ENCODE measurements at regions of chr2 and their contacts with region 1.

Region 1: DNA sequence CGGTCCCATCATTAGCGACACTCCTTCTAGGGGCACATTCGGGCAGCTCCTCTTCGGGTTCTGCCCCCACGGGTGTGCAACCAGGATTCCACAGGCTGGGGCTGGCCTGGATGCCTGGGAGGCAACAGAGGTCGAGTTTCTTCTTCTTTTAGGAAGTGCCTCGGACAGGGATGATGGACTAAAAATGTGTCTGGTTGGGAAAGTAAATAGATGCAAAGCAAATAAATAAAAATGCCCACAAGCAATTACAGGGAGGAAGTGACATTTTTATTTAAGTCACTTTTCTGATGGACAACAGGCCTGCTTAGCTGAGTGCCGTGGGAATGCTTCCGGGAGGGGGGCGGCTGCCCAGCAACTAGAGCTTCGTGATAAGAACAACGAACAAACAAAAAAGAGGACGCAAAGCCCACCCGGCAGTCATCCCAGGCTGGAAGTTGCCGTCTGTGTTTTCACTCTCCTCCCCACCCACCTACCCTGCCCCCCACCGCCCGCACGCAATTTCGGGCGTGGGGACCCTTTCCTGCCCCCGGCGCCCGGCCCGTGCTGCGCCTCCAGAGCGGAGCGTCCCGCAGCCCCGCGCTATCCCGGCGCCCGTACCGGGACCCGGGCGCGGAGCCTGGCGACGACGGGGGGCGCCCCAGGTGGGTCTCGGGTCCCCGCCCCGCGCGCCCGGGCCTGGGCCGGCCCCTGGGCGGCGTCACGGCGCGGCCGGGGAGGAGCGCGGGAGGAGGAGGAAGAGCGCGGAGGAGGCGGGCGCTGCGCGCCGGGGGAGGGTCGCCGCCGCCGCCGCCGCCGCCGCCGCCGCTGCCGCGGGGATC is 412 bp upstream of the NCK2 start:
- DNase-seq: no peak
- ATAC-seq: peak; percentile 97
- H3K4me3 ChIP-seq: peak overlapping the region; percentile 58 to 82
- H3K27ac ChIP-seq: peak overlapping the region; percentile 42; the same call in 1 of the 2 replicates
- H3K4me1 ChIP-seq: peaks cover 23% of the 10 kb centered on the region
- H3K27me3 ChIP-seq: no peaks in the 10 kb centered on the region
- CTCF ChIP-seq: no peak

Region 2: GRCh38 chr2:105576440-105577252 is 167.7 kb before region 1 on chr2:
- CTCF ChIA-PET with region 1: interaction called, 3 read pairs
- POLR2A ChIA-PET with region 1: no interaction called
- in situ Hi-C with region 1: no loop called
- intact Hi-C with region 1: loop called (anchors 10 kb)
- DNase-seq: peak; percentile 32
- ATAC-seq: peak; percentile 83
- H3K4me3 ChIP-seq: peak overlapping the region in 1 of 2 experiments; percentile 26; a peak in 2 of 4 replicates
- H3K27ac ChIP-seq: peak overlapping the region; percentile 57; the same call in 1 of the 2 replicates
- H3K4me1 ChIP-seq: peaks cover 12% of the 10 kb centered on the region
- H3K27me3 ChIP-seq: no peaks in the 10 kb centered on the region
- CTCF ChIP-seq: peak; percentile 81

Measured in Panc1 (cell line).